PC-3 (cell line): ENCODE measurements at regions of chr3 and their contacts with region 1.

Region 1: GRCh38 chr3:43964640-43965039 is 273.9 kb downstream of the ABHD5 start:
- DNase-seq: no peak
- ATAC-seq: no peak
- H3K4me3 ChIP-seq: no peak overlapping the region
- H3K27ac ChIP-seq: no peak overlapping the region
- H3K4me1 ChIP-seq: no peaks in the 10 kb centered on the region
- H3K27me3 ChIP-seq: no peaks in the 10 kb centered on the region
- CTCF ChIP-seq: no peak

Region 2: GRCh38 chr3:44058022-44058867 is 93.6 kb after region 1 on chr3:
- CTCF ChIA-PET with region 1: interaction called, 12 read pairs
- POLR2A ChIA-PET with region 1: no interaction called
- intact Hi-C with region 1: no loop called
- DNase-seq: peak; percentile 67
- ATAC-seq: peak; percentile 91
- H3K4me3 ChIP-seq: peak overlapping the region; percentile 62
- H3K27ac ChIP-seq: peak overlapping the region; percentile 42; the same call in 1 of the 2 replicates
- H3K4me1 ChIP-seq: peaks cover 10% of the 10 kb centered on the region
- H3K27me3 ChIP-seq: no peaks in the 10 kb centered on the region
- CTCF ChIP-seq: no peak